ENCODE measurements at regions of chr1 and their contacts with region 1.

Region 1: DNA sequence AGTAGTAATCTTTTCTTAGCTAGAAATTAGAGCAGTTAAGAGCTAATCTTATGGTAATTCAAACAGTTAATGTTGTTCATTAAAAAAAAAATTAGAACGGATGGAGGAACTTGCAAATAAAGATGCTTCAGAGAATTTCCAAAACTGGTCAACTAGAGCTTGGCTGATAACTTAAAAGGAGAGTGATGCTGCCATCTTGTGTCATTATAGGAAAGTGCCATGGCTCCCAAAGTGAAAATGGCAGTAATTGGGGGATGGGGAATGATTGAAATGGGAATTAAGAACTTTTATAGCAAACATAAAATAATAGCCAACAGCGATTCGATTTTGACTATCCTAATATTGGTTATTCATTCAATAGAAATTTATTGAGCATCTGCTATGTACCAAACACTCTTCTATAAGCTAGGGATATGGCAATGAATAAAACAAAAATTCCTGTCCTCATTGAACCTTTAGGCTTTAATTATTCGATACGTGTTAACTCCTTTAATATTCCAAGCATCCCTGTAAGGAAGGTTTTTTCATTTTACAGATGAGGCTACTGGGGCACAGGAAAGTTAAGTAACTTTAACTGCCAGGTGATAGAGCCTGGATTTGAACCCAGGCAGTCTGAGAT is 5.7 kb upstream of the PLPP3 start:
- H3K4me3 ChIP-seq: no peak overlapping the region
- H3K27ac ChIP-seq: no peak overlapping the region
- H3K4me1 ChIP-seq: no peaks in the 10 kb centered on the region
- CTCF ChIP-seq: peak; percentile 50; the same call in 1 of the 2 replicates

Region 2: GRCh38 chr1:55284852-55285251 is 1300.2 kb before region 1 on chr1:
- CTCF ChIA-PET with region 1: interaction called, 18 read pairs
- POLR2A ChIA-PET with region 1: no interaction called
- H3K4me3 ChIP-seq: no peak overlapping the region
- H3K27ac ChIP-seq: no peak overlapping the region
- H3K4me1 ChIP-seq: no peaks in the 10 kb centered on the region
- CTCF ChIP-seq: peak; percentile 45; the same call in 1 of the 2 replicates

Region 3: GRCh38 chr1:55375617-55376258 is 1209.3 kb before region 1 on chr1:
- CTCF ChIA-PET with region 1: interaction called, 21 read pairs
- POLR2A ChIA-PET with region 1: no interaction called
- H3K4me3 ChIP-seq: no peak overlapping the region
- H3K27ac ChIP-seq: no peak overlapping the region
- H3K4me1 ChIP-seq: no peaks in the 10 kb centered on the region
- CTCF ChIP-seq: peak; percentile 44; the same call in 1 of the 2 replicates

Region 4: GRCh38 chr1:55478742-55479141 is 1106.3 kb before region 1 on chr1:
- CTCF ChIA-PET with region 1: interaction called, 13 read pairs
- POLR2A ChIA-PET with region 1: no interaction called
- H3K4me3 ChIP-seq: no peak overlapping the region
- H3K27ac ChIP-seq: no peak overlapping the region
- H3K4me1 ChIP-seq: no peaks in the 10 kb centered on the region
- CTCF ChIP-seq: no peak

Region 5: GRCh38 chr1:56709269-56709880 is 124.4 kb after region 1 on chr1:
- CTCF ChIA-PET with region 1: interaction called, 24 read pairs
- POLR2A ChIA-PET with region 1: no interaction called
- H3K4me3 ChIP-seq: no peak overlapping the region
- H3K27ac ChIP-seq: no peak overlapping the region
- H3K4me1 ChIP-seq: peaks cover 19% of the 10 kb centered on the region
- CTCF ChIP-seq: no peak